A673 (cell line): ENCODE measurements at regions of chr3 and their contacts with region 1.

Region 1: DNA sequence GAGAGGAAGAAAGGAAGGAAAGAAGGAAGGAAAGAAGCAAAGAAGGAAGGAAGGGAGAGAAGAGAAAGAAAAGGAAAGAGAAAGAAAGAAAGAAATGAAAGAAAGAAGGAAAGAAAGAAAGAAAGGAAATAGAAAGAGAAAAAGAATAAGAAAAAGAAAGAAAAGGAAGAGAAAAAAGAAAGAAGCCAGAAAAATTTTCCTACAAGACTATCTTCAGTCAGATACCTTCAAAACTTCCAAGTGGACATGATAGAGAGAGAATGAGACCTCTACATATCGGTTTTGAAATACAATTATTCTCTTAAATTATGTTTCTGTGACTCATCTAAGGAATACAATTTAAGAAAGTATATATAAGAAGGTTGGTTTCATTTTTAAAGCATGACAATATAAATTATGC is 1369.0 kb downstream of the ZPLD1 start:
- DNase-seq: no peak
- H3K4me3 ChIP-seq: no peak overlapping the region
- H3K27ac ChIP-seq: no peak overlapping the region
- H3K4me1 ChIP-seq: no peaks in the 10 kb centered on the region
- H3K27me3 ChIP-seq: no peaks in the 10 kb centered on the region
- CTCF ChIP-seq: no peak

Region 2: DNA sequence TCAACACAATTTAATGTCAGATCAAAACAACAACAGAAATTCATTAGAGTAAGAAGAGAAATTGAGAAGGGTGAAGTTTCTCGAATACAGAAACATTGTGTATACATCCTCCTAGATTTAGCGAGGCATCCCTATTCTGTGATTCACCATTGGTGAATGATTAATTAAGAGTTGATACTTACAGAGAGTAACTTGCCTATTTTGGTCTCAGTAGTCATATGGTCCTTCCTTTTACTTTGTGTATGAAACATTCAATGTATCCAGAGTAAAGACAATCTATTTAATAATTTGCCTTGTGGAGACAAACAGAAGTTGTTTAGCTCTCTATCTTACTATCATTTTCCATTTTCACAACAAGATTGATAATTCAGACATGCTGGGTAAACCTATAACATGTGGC is 936.9 kb before region 1 on chr3:
- CTCF ChIA-PET with region 1: no interaction called
- POLR2A ChIA-PET with region 1: no interaction called
- intact Hi-C with region 1: no loop called
- DNase-seq: no peak
- H3K4me3 ChIP-seq: no peak overlapping the region
- H3K27ac ChIP-seq: no peak overlapping the region
- H3K4me1 ChIP-seq: no peaks in the 10 kb centered on the region
- H3K27me3 ChIP-seq: no peaks in the 10 kb centered on the region
- CTCF ChIP-seq: no peak

Region 3: GRCh38 chr3:103818800-103819199 is 15.0 kb after region 1 on chr3:
- CTCF ChIA-PET with region 1: interaction called, 4 read pairs
- POLR2A ChIA-PET with region 1: interaction called, 14 read pairs
- intact Hi-C with region 1: no loop called
- DNase-seq: peak; percentile 64
- H3K4me3 ChIP-seq: no peak overlapping the region
- H3K27ac ChIP-seq: peak overlapping the region; percentile 49
- H3K4me1 ChIP-seq: peaks cover 32% of the 10 kb centered on the region
- H3K27me3 ChIP-seq: no peaks in the 10 kb centered on the region
- CTCF ChIP-seq: no peak

Region 4: DNA sequence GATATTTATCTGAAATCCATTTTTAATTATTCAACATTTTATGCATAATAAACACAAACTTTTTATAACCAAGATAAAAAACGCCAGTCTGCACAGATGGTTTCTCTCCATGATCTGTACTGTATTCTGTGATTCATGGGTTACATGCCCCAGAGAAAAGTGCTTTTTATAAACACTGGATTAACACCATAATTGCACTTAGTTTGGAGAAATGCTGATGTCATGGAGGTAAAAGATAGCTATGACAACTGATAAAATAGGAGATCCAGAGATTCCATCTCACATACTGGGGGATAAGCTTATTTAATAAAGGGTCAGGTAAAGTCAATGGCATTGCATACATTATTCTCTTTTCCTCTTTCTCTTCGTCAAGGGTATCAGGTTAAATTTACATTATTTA is 102.5 kb after region 1 on chr3:
- CTCF ChIA-PET with region 1: no interaction called
- POLR2A ChIA-PET with region 1: no interaction called
- intact Hi-C with region 1: no loop called
- DNase-seq: peak; percentile 65
- H3K4me3 ChIP-seq: peak overlapping the region; percentile 9
- H3K27ac ChIP-seq: peak overlapping the region; percentile 67
- H3K4me1 ChIP-seq: peaks cover 22% of the 10 kb centered on the region
- H3K27me3 ChIP-seq: no peaks in the 10 kb centered on the region
- CTCF ChIP-seq: no peak